ENCODE measurements at regions of chr13 and their contacts with region 1.

Region 1: DNA sequence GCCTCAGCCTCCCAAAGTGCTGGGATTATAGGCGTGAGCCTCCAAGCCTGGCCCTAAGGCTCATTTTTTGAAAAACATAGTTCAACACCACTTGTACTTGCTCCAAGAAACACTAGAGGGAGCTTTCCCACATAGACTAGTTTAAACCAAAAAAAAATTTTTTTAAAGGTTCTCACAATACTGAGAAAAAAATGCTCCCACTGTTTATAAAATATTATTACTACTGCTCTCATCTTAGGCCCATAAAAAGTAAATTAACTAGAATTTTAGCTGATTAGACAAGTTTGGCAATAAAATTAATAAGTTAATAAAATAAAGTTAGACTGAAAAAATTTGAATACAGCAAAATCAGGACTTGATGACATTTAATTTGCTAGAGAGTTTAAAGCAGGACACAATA is 109.5 kb downstream of the TBC1D4 start:
- DNase-seq: no peak
- H3K4me3 ChIP-seq: no peak overlapping the region
- CTCF ChIP-seq: peak; percentile 39

Region 2: GRCh38 chr13:73898276-73898675 is 1474.2 kb before region 1 on chr13:
- CTCF ChIA-PET with region 1: no interaction called
- POLR2A ChIA-PET with region 1: no interaction called
- DNase-seq: no peak
- H3K4me3 ChIP-seq: no peak overlapping the region
- CTCF ChIP-seq: no peak

Region 3: GRCh38 chr13:75384879-75385707 is 12.6 kb after region 1 on chr13:
- CTCF ChIA-PET with region 1: interaction called, 25 read pairs
- POLR2A ChIA-PET with region 1: no interaction called
- DNase-seq: no peak
- H3K4me3 ChIP-seq: no peak overlapping the region
- CTCF ChIP-seq: no peak

Region 4: GRCh38 chr13:75416327-75417005 is 43.9 kb after region 1 on chr13:
- CTCF ChIA-PET with region 1: interaction called, 26 read pairs
- POLR2A ChIA-PET with region 1: no interaction called
- DNase-seq: no peak
- H3K4me3 ChIP-seq: no peak overlapping the region
- CTCF ChIP-seq: no peak

Region 5: DNA sequence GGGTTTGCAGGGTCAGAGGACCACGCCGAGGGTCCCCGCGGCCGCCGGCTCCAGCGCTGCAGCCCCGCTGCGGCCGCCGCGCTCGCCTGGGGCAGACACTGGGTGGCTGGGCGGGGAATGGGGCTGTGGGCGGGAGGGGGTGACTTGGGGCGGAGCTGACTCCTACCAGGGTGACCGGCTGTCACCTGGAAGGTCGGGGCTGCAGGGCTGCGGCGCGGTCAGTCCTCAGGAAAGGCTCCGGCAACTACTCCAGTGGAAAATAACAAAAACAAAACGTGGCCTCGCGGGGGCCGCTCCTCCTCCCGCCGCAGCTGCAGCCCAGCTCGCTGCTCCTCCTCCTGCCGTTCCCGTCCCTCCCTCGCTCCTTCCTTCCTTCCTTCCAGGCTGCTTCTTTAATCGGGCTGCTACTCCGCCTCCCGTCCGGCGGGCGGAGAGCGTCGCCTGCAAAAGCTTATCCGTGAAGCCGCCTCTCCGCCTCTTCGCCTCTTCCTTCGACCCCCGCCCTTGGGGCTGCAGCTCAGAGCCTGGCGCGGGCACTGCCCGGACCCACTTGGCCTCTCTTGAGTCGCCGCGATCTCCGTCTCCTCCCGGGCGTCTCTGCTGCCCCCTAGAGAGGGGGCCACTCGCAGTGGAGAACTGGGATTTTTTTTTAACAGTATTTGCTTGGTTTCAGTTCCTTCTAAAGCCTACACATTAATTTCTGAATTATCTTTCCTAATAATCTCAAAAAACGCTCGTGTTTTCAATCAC is 109.7 kb after region 1 on chr13 and contains the start of gene TBC1D4:
- CTCF ChIA-PET with region 1: interaction called, 15 read pairs
- POLR2A ChIA-PET with region 1: no interaction called
- DNase-seq: peak; percentile 44
- H3K4me3 ChIP-seq: peak within 1 kb of the TSS; percentile 70
- CTCF ChIP-seq: peak; percentile 61

Region 6: DNA sequence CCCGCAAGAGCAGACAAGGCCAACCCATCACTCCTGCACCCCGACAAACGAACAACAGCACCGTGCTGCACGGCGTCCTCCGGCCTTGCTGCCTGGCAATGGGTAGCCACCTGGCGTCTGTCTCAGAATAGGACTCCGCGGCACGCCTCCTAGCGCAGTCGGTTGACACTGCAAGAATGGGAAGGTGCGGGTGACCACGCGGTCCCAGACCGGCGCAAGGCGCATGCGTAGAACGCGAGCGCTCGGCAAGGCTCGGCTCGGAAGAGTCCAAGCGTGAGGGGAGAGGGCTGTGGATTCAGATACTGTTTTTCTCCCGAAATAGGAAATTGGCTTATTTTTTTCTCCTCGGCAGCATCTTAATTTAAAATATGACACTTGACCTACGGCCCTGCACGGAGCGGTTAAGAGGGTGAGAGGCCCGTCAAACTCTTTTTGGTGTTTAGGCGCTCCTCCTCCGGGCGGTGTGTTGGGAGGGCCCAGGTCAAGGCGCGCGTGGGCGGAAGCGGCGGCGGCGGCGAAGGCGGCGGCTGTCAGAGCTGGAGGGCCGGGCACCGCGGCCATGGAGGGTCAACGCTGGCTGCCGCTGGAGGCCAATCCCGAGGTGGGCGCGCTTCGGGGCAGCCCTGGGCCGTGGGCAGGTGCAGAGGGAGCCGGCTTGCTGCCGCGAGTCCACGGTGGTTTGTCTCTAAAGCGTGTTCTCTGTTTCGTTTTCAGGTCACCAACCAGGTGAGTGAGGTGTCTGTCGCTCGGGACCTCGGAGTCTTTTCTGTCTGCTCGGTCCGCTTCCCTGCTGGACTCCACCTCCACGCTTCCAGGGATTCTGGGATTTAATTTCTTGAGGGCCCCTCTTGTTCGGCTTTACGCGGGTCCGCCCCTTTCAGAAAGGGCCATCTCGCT is 177.0 kb after region 1 on chr13 and contains the start of gene UCHL3:
- CTCF ChIA-PET with region 1: interaction called, 10 read pairs
- POLR2A ChIA-PET with region 1: no interaction called
- DNase-seq: peak; percentile 59
- H3K4me3 ChIP-seq: peak within 1 kb of the TSS; percentile 91
- CTCF ChIP-seq: peak; percentile 99

Region 7: DNA sequence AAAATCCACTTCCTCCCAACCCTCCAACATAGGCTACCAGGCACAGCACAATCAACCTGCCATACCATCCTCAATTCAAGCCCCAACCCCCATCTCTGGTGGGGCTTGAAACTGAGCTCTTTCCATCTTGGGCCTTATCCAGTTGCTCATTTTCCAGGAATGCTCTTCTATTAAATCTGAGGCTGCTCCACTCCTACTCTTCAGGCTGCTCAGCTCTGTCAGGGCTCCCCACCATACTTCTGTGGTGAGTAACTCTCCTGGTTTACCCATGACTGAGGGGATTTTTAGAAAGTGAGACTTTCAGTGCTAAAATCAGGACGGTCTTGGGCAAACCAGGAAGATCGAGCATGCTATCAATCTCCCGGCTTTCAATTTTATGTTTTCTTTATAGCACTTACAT is 776.4 kb after region 1 on chr13:
- CTCF ChIA-PET with region 1: no interaction called
- POLR2A ChIA-PET with region 1: no interaction called
- DNase-seq: peak; percentile 63
- H3K4me3 ChIP-seq: no peak overlapping the region
- CTCF ChIP-seq: no peak

Measured in AG04449 (cell line).